ENCODE measurements at regions of chrX and their contacts with region 1.

Region 1: GRCh38 chrX:109134777-109135176 is 347.1 kb downstream of the GUCY2F start:
- DNase-seq: no peak
- ATAC-seq: no peak
- H3K4me3 ChIP-seq: no peak overlapping the region
- H3K27ac ChIP-seq: no peak overlapping the region
- H3K4me1 ChIP-seq: no peaks in the 10 kb centered on the region
- H3K27me3 ChIP-seq: no peaks in the 10 kb centered on the region
- CTCF ChIP-seq: no peak
- EP300 ChIP-seq: no peak
- POLR2A ChIP-seq: no peak
- RAD21 ChIP-seq: no peak

Region 2: GRCh38 chrX:109089359-109089758 is 45.4 kb before region 1 on chrX:
- CTCF ChIA-PET with region 1: interaction called, 3 read pairs
- POLR2A ChIA-PET with region 1: no interaction called
- RAD21 ChIA-PET with region 1: no interaction called
- SMC1A ChIA-PET with region 1: no interaction called
- in situ Hi-C with region 1: no loop called
- intact Hi-C with region 1: loop called (anchors 5 kb)
- DNase-seq: peak; percentile 32
- ATAC-seq: peak; percentile 89
- H3K4me3 ChIP-seq: no peak overlapping the region
- H3K27ac ChIP-seq: no peak overlapping the region
- H3K4me1 ChIP-seq: no peaks in the 10 kb centered on the region
- H3K27me3 ChIP-seq: no peaks in the 10 kb centered on the region
- CTCF ChIP-seq: no peak
- EP300 ChIP-seq: no peak
- POLR2A ChIP-seq: no peak
- RAD21 ChIP-seq: no peak

Measured in GM12878 (cell line).